Activated CD8-positive, alpha-beta T cell treated with anti-CD3 and anti-CD28 coated beads for 36 hours (primary cell): ENCODE measurements at regions of chr4 and their contacts with region 1.

Region 1: DNA sequence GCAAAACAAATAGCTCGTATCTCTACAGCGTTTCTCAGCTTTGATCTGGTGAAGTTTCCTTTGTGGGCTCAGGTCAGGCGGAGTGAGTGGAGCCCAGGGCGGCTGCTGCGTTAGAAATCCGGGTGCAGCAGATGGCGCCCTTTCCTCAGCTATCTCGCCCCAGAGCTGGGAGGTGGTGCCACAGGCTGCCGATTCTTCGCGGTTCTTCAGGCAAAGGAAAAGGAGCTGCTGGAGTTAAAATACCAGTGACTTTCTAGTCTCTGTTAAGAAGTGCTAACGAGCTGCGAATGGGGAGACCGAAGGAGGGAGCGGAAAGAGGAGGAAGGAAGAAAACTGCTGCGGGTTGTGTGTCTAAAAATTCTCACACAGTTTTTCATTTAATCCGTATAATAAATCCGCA is 114.6 kb downstream of the CPE start:
- DNase-seq: peak; percentile 80
- ATAC-seq: peak; percentile 89
- H3K4me3 Mint-ChIP-seq: peak overlapping the region; percentile 40
- H3K27ac Mint-ChIP-seq: no peak overlapping the region
- H3K4me1 Mint-ChIP-seq: peaks cover 3% of the 10 kb centered on the region
- H3K27me3 Mint-ChIP-seq: peaks cover 24% of the 10 kb centered on the region
- CTCF ChIP-seq: peak; percentile 68

Region 2: GRCh38 chr4:165415910-165416309 is 77.4 kb before region 1 on chr4:
- CTCF ChIA-PET with region 1: no interaction called
- POLR2A ChIA-PET with region 1: no interaction called
- intact Hi-C with region 1: no loop called
- DNase-seq: no peak
- ATAC-seq: no peak
- H3K4me3 Mint-ChIP-seq: no peak overlapping the region
- H3K27ac Mint-ChIP-seq: no peak overlapping the region
- H3K4me1 Mint-ChIP-seq: no peaks in the 10 kb centered on the region
- H3K27me3 Mint-ChIP-seq: peaks cover 4% of the 10 kb centered on the region
- CTCF ChIP-seq: no peak

Region 3: DNA sequence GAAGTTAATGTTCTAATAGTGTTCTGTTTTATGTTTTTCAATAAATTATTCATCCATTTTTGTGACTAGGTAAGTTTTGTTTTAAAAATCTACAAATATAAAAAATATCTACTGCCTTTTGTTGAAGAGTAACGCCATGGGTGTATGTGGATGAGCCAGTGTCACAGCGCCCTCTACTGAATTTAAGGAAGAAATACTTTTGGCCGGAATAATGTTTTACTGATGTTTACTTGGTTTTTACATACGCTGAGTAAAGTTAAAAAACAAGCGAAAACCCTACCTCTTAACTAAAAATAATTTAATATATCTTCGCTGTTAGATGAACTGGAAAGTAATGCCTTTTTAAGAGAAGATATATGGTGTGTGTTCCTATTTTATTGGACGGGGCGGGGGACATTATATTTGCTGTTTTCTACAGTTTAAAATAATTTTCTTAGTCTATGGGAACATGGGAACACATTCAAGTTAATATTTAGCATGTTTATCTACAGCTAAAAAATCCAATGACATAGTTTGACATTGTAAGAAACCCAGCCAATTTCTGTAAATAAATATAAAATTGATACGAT is 28.5 kb before region 1 on chr4:
- CTCF ChIA-PET with region 1: interaction called, 12 read pairs
- POLR2A ChIA-PET with region 1: no interaction called
- intact Hi-C with region 1: no loop called
- DNase-seq: peak; percentile 34
- ATAC-seq: peak; percentile 58
- H3K4me3 Mint-ChIP-seq: no peak overlapping the region
- H3K27ac Mint-ChIP-seq: no peak overlapping the region
- H3K4me1 Mint-ChIP-seq: no peaks in the 10 kb centered on the region
- H3K27me3 Mint-ChIP-seq: peaks cover 3% of the 10 kb centered on the region
- CTCF ChIP-seq: peak; percentile 83

Region 4: GRCh38 chr4:165481053-165481835 is 12.1 kb before region 1 on chr4:
- CTCF ChIA-PET with region 1: interaction called, 33 read pairs
- POLR2A ChIA-PET with region 1: no interaction called
- intact Hi-C with region 1: no loop called
- DNase-seq: no peak
- ATAC-seq: no peak
- H3K4me3 Mint-ChIP-seq: no peak overlapping the region
- H3K27ac Mint-ChIP-seq: no peak overlapping the region
- H3K4me1 Mint-ChIP-seq: no peaks in the 10 kb centered on the region
- H3K27me3 Mint-ChIP-seq: peaks cover 10% of the 10 kb centered on the region
- CTCF ChIP-seq: no peak

Region 5: GRCh38 chr4:165537028-165537648 is 43.8 kb after region 1 on chr4:
- CTCF ChIA-PET with region 1: interaction called, 14 read pairs
- POLR2A ChIA-PET with region 1: no interaction called
- intact Hi-C with region 1: no loop called
- DNase-seq: peak; percentile 8
- ATAC-seq: no peak
- H3K4me3 Mint-ChIP-seq: no peak overlapping the region
- H3K27ac Mint-ChIP-seq: no peak overlapping the region
- H3K4me1 Mint-ChIP-seq: no peaks in the 10 kb centered on the region
- H3K27me3 Mint-ChIP-seq: peaks cover 6% of the 10 kb centered on the region
- CTCF ChIP-seq: peak; percentile 91

Region 6: GRCh38 chr4:166091912-166092510 is 598.7 kb after region 1 on chr4:
- CTCF ChIA-PET with region 1: interaction called, 15 read pairs
- POLR2A ChIA-PET with region 1: no interaction called
- intact Hi-C with region 1: loop called (anchors 5 kb)
- DNase-seq: no peak
- ATAC-seq: no peak
- H3K4me3 Mint-ChIP-seq: no peak overlapping the region
- H3K27ac Mint-ChIP-seq: no peak overlapping the region
- H3K4me1 Mint-ChIP-seq: no peaks in the 10 kb centered on the region
- H3K27me3 Mint-ChIP-seq: no peaks in the 10 kb centered on the region
- CTCF ChIP-seq: peak; percentile 69